Colonic mucosa (tissue), 4 donors: ENCODE measurements at regions of chr1 and their contacts with region 1.

Region 1: GRCh38 chr1:98053471-98054366 is 132.9 kb upstream of the DPYD start:
- DNase-seq: peak; percentile 47
- H3K4me3 ChIP-seq: peak overlapping the region; percentile 48
- H3K27ac ChIP-seq: no peak overlapping the region
- H3K4me1 ChIP-seq: no peaks in the 10 kb centered on the region
- H3K27me3 ChIP-seq: peaks cover 33% of the 10 kb centered on the region
- CTCF ChIP-seq: peak; percentile 93

Region 2: GRCh38 chr1:96966536-96967138 is 1087.1 kb before region 1 on chr1:
- intact Hi-C with region 1: loop called (anchors 5 kb)
- DNase-seq: peak; percentile 79
- H3K4me3 ChIP-seq: no peak overlapping the region
- H3K27ac ChIP-seq: no peak overlapping the region
- H3K4me1 ChIP-seq: no peaks in the 10 kb centered on the region
- H3K27me3 ChIP-seq: no peaks in the 10 kb centered on the region
- CTCF ChIP-seq: peak; percentile 90

Region 3: GRCh38 chr1:97524211-97524610 is 529.5 kb before region 1 on chr1:
- intact Hi-C with region 1: loop called (anchors 10 kb)
- DNase-seq: no peak
- H3K4me3 ChIP-seq: no peak overlapping the region
- H3K27ac ChIP-seq: no peak overlapping the region
- H3K4me1 ChIP-seq: no peaks in the 10 kb centered on the region
- H3K27me3 ChIP-seq: no peaks in the 10 kb centered on the region
- CTCF ChIP-seq: no peak